ENCODE measurements at regions of chr10 and their contacts with region 1.

Region 1: DNA sequence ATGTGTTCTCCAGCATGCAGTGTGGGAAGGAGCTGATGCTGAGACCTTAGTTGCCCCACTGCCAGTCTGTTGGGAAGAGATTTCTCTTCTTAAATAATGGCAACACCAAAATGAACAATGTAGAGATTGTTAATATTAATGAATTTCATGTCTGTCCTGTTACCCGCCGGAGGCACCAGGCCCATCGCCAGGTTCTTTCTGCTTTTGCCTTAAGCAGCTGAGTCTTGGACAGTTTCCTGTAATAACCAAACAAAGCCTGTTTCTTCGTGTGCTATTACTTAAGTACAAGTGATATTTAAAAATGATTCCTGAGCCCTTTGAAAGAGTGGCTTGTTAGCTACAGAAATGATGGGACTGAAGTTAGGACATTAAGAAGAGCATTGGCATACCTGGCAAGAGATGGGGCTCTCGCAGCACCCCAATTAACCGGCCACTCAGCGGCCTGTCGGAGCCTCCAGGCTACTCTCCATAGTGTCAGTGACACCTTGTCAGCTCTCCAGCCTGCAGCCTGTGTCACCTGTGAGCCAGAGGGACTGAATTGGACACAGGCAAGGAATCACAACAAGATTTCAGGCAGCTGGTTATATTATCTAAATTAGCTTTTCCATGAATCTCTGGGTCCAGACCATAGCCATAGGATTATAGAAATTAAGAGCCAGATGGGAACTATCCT is 142.0 kb downstream of the CELF2 start:
- DNase-seq: no peak
- ATAC-seq: no peak
- H3K4me3 ChIP-seq: peak overlapping the region in 1 of 5 experiments; percentile 56
- H3K4me3 Mint-ChIP-seq: peak overlapping the region; percentile 19
- H3K27ac ChIP-seq: no peak overlapping the region
- H3K27ac Mint-ChIP-seq: peak overlapping the region; percentile 56
- H3K4me1 ChIP-seq: peaks cover 79 to 86% of the 10 kb centered on the region in 2 donors
- H3K4me1 Mint-ChIP-seq: peaks cover 92% of the 10 kb centered on the region
- H3K27me3 ChIP-seq: no peaks in the 10 kb centered on the region
- H3K27me3 Mint-ChIP-seq: no peaks in the 10 kb centered on the region
- CTCF ChIP-seq: no peak

Region 2: DNA sequence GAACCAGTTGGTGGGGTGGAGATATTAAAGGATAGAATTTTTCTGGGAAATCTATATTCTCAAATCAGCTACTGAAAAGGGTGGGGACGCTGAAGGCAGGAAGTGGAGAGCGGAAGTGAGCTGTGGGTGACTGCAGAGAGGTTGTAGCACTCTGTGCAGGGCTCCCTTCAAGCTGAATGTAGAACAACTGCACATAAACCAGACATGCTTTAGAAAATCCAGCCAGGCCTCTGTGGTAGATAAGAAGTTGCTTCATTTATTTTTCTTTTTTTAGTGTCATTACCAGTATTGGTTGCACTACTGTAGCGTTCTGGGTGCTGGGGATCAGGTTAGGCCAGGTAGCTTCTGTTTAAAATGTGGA is 14.2 kb before region 1 on chr10:
- CTCF ChIA-PET with region 1: interaction called, 139 read pairs
- POLR2A ChIA-PET with region 1: interaction called, 34 read pairs
- intact Hi-C with region 1: loop called (anchors 1 kb)
- DNase-seq: peak; percentile 70
- ATAC-seq: peak; percentile 75
- H3K4me3 ChIP-seq: peak overlapping the region in 4 of 5 experiments; percentile 7 to 33 (median 22)
- H3K4me3 Mint-ChIP-seq: peak overlapping the region; percentile 68
- H3K27ac ChIP-seq: peak overlapping the region; percentile 33 to 76
- H3K27ac Mint-ChIP-seq: peak overlapping the region; percentile 85
- H3K4me1 ChIP-seq: peaks cover 84 to 89% of the 10 kb centered on the region in 2 donors
- H3K4me1 Mint-ChIP-seq: peaks cover 90% of the 10 kb centered on the region
- H3K27me3 ChIP-seq: no peaks in the 10 kb centered on the region
- H3K27me3 Mint-ChIP-seq: no peaks in the 10 kb centered on the region
- CTCF ChIP-seq: no peak

Measured in B cell (primary cell).